Breast epithelium (tissue), 4 donors: ENCODE measurements at regions of chr2 and their contacts with region 1.

Region 1: GRCh38 chr2:65031341-65032018 is 24.7 kb upstream of the CEP68 start:
- DNase-seq: no peak
- H3K4me3 ChIP-seq: peak overlapping the region in 2 of 3 donors; percentile 4 to 12
- H3K27ac ChIP-seq: no peak overlapping the region
- H3K4me1 ChIP-seq: peaks cover 0 to 7% of the 10 kb centered on the region in 2 donors
- H3K27me3 ChIP-seq: no peaks in the 10 kb centered on the region
- CTCF ChIP-seq: no peak
- POLR2A ChIP-seq: no peak

Region 2: GRCh38 chr2:64914735-64915509 is 116.6 kb before region 1 on chr2:
- intact Hi-C with region 1: loop called (anchors 10 kb)
- DNase-seq: no peak
- H3K4me3 ChIP-seq: no peak overlapping the region
- H3K27ac ChIP-seq: no peak overlapping the region
- H3K4me1 ChIP-seq: no peaks in the 10 kb centered on the region
- H3K27me3 ChIP-seq: no peaks in the 10 kb centered on the region
- CTCF ChIP-seq: no peak
- POLR2A ChIP-seq: no peak